AG04449 (cell line): ENCODE measurements at regions of chr17 and their contacts with region 1.

Region 1: DNA sequence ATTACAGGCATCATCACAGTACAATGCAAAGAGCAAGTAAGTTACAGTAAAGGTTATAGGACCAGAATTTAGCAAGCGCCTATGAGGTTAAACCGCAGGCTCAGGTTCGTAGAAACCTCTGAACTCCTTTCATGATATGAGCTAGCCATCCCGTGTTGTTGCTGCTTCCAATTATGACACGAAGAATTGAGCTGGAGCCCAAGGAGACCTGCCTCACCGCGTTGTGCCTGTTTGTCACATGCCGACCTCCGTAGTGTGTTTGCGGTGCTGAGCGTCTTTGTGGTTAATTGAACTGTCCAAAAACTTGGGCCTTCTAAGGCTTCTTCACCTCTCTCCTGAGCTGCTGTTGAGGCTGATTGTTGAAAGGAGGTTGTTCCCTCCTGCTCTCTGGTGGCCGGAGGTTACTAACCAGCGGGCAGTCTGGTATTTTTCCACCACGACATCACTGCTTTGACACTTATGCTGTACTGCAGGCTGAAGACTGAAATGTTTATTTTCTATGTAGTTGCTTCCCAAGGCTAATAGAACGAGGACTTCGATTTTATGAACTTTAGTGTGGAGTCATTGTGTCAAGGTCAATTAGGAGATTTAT is 67.5 kb downstream of the SEC14L1 start:
- DNase-seq: no peak
- H3K4me3 ChIP-seq: no peak overlapping the region
- CTCF ChIP-seq: peak; percentile 33

Region 2: DNA sequence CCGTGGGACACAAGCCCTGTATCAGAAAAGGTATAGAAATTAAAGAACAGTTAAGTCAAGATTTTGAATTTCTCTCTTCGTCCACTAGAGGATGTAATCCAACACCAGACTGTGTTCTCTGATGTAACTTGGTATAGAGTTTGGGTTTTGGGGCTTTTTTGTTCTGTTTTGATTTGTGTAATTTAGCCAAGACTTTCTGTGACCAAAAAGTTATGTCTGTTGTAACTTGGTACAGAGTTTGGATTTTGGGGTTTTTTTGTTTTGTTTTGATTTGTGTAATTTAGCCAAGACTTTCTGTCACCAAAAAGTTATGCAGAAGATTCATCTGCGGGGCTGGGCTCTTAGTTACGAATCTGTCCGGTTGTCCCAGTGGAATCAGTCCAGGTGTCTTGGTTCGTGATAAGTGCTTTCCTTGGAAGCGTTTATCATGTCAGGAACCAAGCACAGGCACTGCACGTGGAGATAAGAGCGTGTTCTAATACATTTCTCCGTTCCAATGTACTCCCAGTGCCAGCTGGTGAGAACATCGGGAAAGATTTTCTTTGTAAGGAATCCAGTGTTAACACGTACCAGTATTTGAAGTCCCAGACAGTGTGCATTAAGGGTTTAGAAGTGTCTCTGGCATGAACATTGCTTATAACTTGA is 111.6 kb before region 1 on chr17:
- CTCF ChIA-PET with region 1: interaction called, 19 read pairs
- POLR2A ChIA-PET with region 1: interaction called, 5 read pairs
- DNase-seq: no peak
- H3K4me3 ChIP-seq: no peak overlapping the region
- CTCF ChIP-seq: peak; percentile 64